Lower leg skin (tissue), 4 donors: ENCODE measurements at regions of chr6 and their contacts with region 1.

Region 1: GRCh38 chr6:32195652-32195901 is 3.1 kb upstream of the GPSM3 start:
- DNase-seq: peak; percentile 100
- H3K4me3 ChIP-seq: no peak overlapping the region
- CTCF ChIP-seq: no peak
- POLR2A ChIP-seq: no peak

Region 2: DNA sequence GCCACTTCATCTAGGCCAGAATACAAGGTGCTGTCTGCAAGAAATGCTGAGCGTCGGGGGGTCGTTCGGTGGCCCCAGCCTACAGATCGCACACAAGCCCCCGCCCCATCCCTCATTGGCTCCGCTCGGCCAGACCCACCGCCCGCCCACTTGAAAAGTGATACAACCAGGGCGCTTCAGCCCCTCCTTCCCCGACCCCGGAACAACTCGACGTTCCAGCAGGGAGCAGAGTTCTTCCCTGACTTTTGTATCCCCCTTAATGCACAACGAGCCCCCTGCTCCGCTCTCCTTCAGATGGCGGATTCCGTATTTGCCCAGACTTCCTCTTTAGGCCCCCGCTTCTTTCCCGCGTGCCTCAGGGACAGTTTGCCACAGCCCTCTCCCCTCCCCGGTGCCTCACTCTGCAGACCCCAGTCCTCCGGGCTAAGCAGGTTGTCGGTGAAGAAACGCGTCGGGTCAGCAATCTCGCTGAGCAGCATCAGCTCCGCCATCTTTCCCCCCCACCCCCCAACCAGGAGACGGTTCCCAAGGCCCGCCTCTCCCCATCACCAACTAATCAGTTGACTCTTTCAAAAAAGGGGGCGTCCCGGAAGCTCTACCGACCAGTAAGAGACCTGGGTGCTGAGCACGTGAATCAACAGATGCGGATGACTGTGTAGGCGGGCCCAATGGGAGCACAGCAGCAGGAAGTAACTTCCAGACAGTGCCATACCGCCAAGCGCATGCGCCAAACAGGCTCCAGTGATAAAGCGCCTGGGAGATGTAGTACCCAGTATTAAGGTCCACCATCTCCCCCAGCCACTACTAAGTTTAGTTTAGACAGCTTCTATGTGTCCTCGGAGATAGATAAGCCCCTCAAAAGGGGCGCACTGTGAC is 67.6 kb before region 1 on chr6 and contains the start of gene ATF6B:
- intact Hi-C with region 1: loop called (anchors 10 kb)
- DNase-seq: peak; percentile 99 to 100
- H3K4me3 ChIP-seq: peak within 1 kb of the TSS; percentile 80
- CTCF ChIP-seq: no peak
- POLR2A ChIP-seq: no peak
- total RNA-seq, gene ATF6B: 46.8 to 102 (median 54.1) TPM

Region 3: GRCh38 chr6:32529697-32530429 is 334.3 kb after region 1 on chr6 and contains the start of gene HLA-DRB5:
- intact Hi-C with region 1: no loop called
- DNase-seq: peak; percentile 12 to 70
- H3K4me3 ChIP-seq: no peak within 1 kb of the TSS
- CTCF ChIP-seq: no peak
- POLR2A ChIP-seq: no peak
- total RNA-seq, gene HLA-DRB5: 0.25 to 23.9 (median 2.7) TPM